Left ventricle myocardium superior (tissue), 1 donor: ENCODE measurements at regions of chr1 and their contacts with region 1.

Region 1: GRCh38 chr1:156889802-156890585 is 3.5 kb upstream of the PEAR1 start:
- DNase-seq: peak; percentile 89
- ATAC-seq: peak; percentile 32

Region 2: DNA sequence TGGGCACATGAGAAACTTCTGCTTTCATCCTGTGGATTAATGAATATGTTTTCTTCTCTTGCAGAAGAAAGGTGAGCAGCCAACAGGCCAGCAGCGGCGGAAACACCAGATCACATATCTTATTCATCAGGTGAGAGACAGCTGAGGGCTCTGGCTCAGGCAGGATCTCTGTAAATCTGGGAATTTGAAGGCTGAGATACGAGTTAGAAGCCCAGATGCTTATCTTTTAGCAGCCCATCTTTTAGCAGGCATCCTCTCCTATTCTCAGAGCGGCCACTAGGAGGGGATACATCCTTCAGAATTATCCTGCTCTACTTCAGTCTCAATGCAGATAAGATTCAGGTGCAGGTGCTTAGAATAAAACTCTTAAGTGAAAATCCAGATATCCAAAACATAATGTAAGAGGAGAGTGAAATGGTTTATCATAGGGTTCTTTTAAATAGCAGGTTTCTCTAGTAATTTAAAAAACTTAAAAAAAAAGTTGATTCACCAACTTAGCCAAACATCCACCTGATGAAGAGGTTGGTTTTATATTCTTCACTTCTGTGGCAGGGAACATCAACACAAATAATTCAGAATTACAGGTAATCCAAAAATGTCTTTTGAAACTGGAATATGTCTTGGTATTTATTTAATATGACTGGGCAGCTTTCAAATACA is 92.7 kb before region 1 on chr1:
- intact Hi-C with region 1: loop called (anchors 10 kb)
- DNase-seq: no peak
- ATAC-seq: no peak